ENCODE measurements at regions of chr6 and their contacts with region 1.

Region 1: DNA sequence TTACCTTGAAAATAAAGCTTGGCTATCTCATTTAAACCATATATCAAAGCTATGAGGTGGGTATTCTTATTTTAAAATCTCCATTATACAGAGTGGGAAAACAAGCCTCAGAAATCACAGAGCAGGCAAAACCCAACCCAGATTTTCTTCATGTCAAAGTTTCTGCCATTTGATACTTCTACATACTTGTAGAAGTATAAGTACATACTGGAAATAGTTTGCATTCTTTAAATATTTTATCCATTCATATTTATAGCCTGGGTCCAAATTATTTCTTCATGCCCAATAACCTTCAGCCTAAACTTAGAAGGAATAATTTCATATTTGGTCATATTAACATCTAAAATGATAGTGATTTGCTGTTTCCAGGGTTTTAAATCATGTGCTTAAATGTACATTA is 61.8 kb downstream of the MLIP start:
- DNase-seq: no peak
- H3K4me3 ChIP-seq: no peak overlapping the region
- H3K27ac ChIP-seq: no peak overlapping the region
- H3K4me1 ChIP-seq: peaks cover 3% of the 10 kb centered on the region
- H3K27me3 ChIP-seq: peaks cover 2% of the 10 kb centered on the region
- CTCF ChIP-seq: no peak

Region 2: GRCh38 chr6:54010340-54011276 is 162.5 kb before region 1 on chr6:
- CTCF ChIA-PET with region 1: no interaction called
- dilution Hi-C with region 1: no loop called
- in situ Hi-C with region 1: no loop called
- intact Hi-C with region 1: no loop called
- DNase-seq: no peak
- H3K4me3 ChIP-seq: no peak overlapping the region
- H3K27ac ChIP-seq: no peak overlapping the region
- H3K4me1 ChIP-seq: no peaks in the 10 kb centered on the region
- H3K27me3 ChIP-seq: no peaks in the 10 kb centered on the region
- CTCF ChIP-seq: no peak

Region 3: DNA sequence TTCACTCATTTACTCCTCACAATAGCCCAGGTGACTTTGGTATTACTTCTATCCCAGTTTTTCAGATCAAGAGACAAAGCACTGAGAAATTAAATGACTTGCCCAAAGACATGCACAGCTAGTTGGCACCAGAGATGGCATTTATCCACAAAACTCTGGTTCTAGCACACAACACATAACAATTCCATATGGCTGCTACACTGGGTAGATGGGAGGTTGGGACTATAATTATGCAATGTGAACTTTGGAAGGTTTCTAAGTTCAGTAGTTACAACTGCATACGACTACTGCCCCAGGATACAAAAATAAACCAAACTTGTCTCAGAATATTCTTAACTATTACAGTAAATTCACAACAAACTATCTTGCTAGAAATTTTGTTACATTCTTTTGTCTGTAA is 116.0 kb before region 1 on chr6:
- CTCF ChIA-PET with region 1: interaction called, 28 read pairs
- dilution Hi-C with region 1: no loop called
- in situ Hi-C with region 1: no loop called
- intact Hi-C with region 1: no loop called
- DNase-seq: no peak
- H3K4me3 ChIP-seq: no peak overlapping the region
- H3K27ac ChIP-seq: no peak overlapping the region
- H3K4me1 ChIP-seq: peaks cover 13% of the 10 kb centered on the region
- H3K27me3 ChIP-seq: no peaks in the 10 kb centered on the region
- CTCF ChIP-seq: no peak

Region 4: GRCh38 chr6:54214286-54214685 is 41.2 kb after region 1 on chr6:
- CTCF ChIA-PET with region 1: no interaction called
- dilution Hi-C with region 1: no loop called
- in situ Hi-C with region 1: no loop called
- intact Hi-C with region 1: no loop called
- DNase-seq: no peak
- H3K4me3 ChIP-seq: no peak overlapping the region
- H3K27ac ChIP-seq: no peak overlapping the region
- H3K4me1 ChIP-seq: no peaks in the 10 kb centered on the region
- H3K27me3 ChIP-seq: no peaks in the 10 kb centered on the region
- CTCF ChIP-seq: no peak